HCT116 (cell line): ENCODE measurements at regions of chr13 and their contacts with region 1.

Region 1: DNA sequence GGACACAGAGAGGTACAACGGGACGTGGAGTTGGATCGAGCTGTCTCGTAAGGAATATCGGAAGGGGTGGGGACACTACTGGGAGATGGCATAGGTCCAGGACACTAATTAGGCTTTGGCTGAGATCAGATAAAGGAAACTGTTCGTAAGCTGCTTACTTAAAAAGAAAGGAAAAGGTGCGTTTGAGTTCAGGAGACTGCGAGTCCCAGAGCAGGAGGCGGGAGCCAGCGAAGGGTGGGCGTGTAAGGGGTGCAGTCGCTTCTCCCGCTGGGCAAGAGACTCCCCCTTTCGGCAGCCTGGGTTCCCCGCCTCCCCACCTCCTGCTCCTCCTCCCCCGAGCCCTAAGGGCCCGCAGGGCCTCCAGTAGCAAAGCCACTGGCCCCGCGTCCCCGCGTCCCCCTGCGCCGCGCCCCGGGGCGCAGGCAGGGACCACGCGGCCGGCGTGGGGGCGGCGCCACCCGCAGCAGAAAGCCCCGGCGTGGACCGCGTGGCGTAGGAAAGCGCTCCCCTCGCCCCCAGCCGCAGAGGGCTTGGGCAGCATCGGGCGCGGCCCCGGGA is 547 bp downstream of the ABCC4 start:
- DNase-seq: peak; percentile 23
- ATAC-seq: peak; percentile 53
- H3K4me3 ChIP-seq: peak overlapping the region; percentile 55 to 82
- H3K27ac ChIP-seq: peak overlapping the region; percentile 96
- H3K4me1 ChIP-seq: peaks cover 36 to 56% of the 10 kb centered on the region in 2 experiments
- H3K27me3 ChIP-seq: no peaks in the 10 kb centered on the region
- CTCF ChIP-seq: no peak
- POLR2A ChIP-seq: peak; percentile 11
- RAD21 ChIP-seq: no peak

Region 2: GRCh38 chr13:94416454-94417080 is 884.1 kb before region 1 on chr13:
- CTCF ChIA-PET with region 1: no interaction called
- POLR2A ChIA-PET with region 1: no interaction called
- RAD21 ChIA-PET with region 1: no interaction called
- intact Hi-C with region 1: no loop called
- DNase-seq: peak; percentile 51
- ATAC-seq: peak; percentile 93
- H3K4me3 ChIP-seq: no peak overlapping the region
- H3K27ac ChIP-seq: no peak overlapping the region
- H3K4me1 ChIP-seq: no peaks in the 10 kb centered on the region
- H3K27me3 ChIP-seq: 0 out of 2 replicates have a peak, but pooled peaks cover 4% of the 10 kb centered on the region
- CTCF ChIP-seq: peak; percentile 17 to 82 (median 72); a peak in 5 of 6 replicates
- POLR2A ChIP-seq: no peak
- RAD21 ChIP-seq: peak; percentile 43

Region 3: DNA sequence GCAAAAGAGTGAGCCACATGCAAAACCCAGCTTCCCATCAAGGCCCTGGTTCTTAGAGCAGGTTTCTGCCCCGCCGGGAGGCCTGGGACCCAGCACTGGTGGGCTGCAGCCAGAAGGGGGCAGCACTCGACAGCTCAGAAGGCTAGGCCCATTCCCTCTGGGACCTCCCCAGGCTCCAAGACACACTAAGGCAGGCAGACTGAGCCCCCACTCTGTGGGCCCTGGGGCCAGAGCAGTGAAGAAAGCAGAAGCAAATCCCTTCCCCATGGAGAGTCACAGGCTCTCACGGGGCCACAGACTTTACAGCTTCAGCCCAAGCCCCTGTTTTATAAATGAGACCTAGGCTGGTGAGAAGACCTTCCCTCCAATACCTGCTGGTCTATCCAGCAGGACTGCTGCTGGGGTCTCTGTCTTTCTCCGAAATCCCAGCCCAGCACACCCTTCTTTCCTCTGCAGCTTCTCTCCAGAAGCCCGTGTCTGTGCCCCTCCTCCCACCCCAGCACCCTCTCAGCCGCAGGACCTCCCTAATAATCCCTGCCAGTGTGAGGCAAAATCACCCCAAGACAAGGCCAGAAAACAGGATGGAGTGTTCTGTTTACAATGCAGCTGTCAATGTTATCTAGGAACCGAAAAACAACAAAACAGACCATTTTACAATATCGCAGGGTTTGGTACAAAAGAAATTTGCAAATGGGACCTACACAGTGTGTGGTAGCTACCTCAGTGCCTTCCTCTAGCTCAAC is 108.7 kb before region 1 on chr13:
- CTCF ChIA-PET with region 1: interaction called, 6 read pairs
- POLR2A ChIA-PET with region 1: no interaction called
- RAD21 ChIA-PET with region 1: no interaction called
- intact Hi-C with region 1: loop called (anchors 1 kb)
- DNase-seq: peak; percentile 45
- ATAC-seq: peak; percentile 99
- H3K4me3 ChIP-seq: no peak overlapping the region
- H3K27ac ChIP-seq: no peak overlapping the region
- H3K4me1 ChIP-seq: no peaks in the 10 kb centered on the region
- H3K27me3 ChIP-seq: no peaks in the 10 kb centered on the region
- CTCF ChIP-seq: peak; percentile 80 to 97 (median 94)
- POLR2A ChIP-seq: no peak
- RAD21 ChIP-seq: peak; percentile 91

Region 4: DNA sequence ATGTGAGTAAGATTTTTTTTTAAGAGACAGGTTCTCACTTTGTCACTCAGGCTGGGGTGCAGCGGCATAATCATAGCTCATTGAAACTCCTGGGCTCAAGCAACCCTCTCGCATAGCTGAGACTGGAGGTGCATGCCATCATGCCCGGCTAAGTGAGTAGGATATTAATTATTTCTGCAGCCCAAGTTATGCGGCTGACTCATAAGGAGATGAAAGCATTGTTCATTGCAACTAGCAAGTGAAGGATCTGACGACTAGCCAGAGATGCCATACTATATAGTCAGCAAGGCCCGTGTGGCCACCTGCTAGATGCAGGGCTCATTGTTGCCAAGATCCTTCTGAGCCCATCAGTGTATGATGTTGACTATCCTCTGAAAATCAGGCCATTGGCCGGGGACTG is 44.6 kb before region 1 on chr13:
- CTCF ChIA-PET with region 1: interaction called, 13 read pairs
- POLR2A ChIA-PET with region 1: no interaction called
- RAD21 ChIA-PET with region 1: no interaction called
- intact Hi-C with region 1: loop called (anchors 5 kb)
- DNase-seq: peak; percentile 93
- ATAC-seq: peak; percentile 90
- H3K4me3 ChIP-seq: peak overlapping the region in 1 of 2 experiments; percentile 39; a peak in 2 of 4 replicates
- H3K27ac ChIP-seq: peak overlapping the region; percentile 90
- H3K4me1 ChIP-seq: peaks cover 57 to 73% of the 10 kb centered on the region in 2 experiments
- H3K27me3 ChIP-seq: no peaks in the 10 kb centered on the region
- CTCF ChIP-seq: no peak
- POLR2A ChIP-seq: no peak
- RAD21 ChIP-seq: no peak

Region 5: GRCh38 chr13:95378603-95379002 is 77.9 kb after region 1 on chr13:
- CTCF ChIA-PET with region 1: interaction called, 30 read pairs
- POLR2A ChIA-PET with region 1: interaction called, 5 read pairs
- RAD21 ChIA-PET with region 1: interaction called, 6 to 7 read pairs
- intact Hi-C with region 1: loop called (anchors 1 kb)
- DNase-seq: no peak
- ATAC-seq: no peak
- H3K4me3 ChIP-seq: no peak overlapping the region
- H3K27ac ChIP-seq: no peak overlapping the region
- H3K4me1 ChIP-seq: peaks cover 9 to 12% of the 10 kb centered on the region in 2 experiments
- H3K27me3 ChIP-seq: no peaks in the 10 kb centered on the region
- CTCF ChIP-seq: no peak
- POLR2A ChIP-seq: no peak
- RAD21 ChIP-seq: no peak

Region 6: GRCh38 chr13:95480131-95480545 is 179.4 kb after region 1 on chr13:
- CTCF ChIA-PET with region 1: no interaction called
- POLR2A ChIA-PET with region 1: no interaction called
- RAD21 ChIA-PET with region 1: no interaction called
- intact Hi-C with region 1: loop called (anchors 10 kb)
- DNase-seq: no peak
- ATAC-seq: no peak
- H3K4me3 ChIP-seq: no peak overlapping the region
- H3K27ac ChIP-seq: no peak overlapping the region
- H3K4me1 ChIP-seq: peaks cover 3 to 12% of the 10 kb centered on the region in 2 experiments; a peak in 3 of 4 replicates
- H3K27me3 ChIP-seq: no peaks in the 10 kb centered on the region
- CTCF ChIP-seq: no peak
- POLR2A ChIP-seq: no peak
- RAD21 ChIP-seq: no peak